Mammary epithelial cell (primary cell): ENCODE measurements at regions of chr5 and their contacts with region 1.

Region 1: DNA sequence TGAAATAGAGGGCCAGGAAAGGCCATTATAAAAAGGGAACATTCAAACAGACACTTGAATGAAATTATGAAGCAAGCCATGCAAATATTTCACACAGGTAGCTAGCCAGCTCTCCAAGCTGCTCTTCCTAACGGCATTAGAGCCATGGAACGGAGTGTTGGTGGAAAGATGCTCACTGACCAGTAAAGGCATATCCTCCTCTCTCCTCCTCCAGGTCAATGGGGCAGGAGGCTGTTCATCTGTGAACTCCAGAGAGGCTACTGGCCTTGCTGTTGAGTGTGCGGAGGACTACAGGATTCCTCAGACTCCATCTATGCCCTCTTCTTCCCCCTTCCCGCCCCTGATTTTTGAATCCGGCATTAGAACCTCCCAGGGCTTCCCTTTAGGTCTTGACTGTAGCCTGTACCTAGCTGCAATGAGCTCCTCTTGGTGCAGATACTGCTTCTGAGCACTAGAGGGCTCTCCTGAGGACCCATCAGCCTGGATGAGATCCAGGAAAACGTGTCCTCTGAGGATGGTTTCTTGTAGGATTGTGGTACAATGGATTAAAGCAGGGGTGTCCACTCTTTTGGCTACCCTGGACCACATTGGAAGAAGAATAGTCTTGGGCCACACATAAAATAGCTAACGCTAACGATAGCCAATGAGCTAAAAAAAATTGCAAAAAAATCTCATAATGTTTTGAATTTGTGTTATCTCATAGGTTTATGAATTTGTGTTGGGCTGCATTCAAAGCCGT is 162.2 kb downstream of the SREK1 start:
- DNase-seq: peak; percentile 58
- H3K4me3 ChIP-seq: no peak overlapping the region
- H3K27ac ChIP-seq: no peak overlapping the region
- H3K4me1 ChIP-seq: no peaks in the 10 kb centered on the region
- H3K27me3 ChIP-seq: no peaks in the 10 kb centered on the region
- CTCF ChIP-seq: peak; percentile 79 to 97

Region 2: DNA sequence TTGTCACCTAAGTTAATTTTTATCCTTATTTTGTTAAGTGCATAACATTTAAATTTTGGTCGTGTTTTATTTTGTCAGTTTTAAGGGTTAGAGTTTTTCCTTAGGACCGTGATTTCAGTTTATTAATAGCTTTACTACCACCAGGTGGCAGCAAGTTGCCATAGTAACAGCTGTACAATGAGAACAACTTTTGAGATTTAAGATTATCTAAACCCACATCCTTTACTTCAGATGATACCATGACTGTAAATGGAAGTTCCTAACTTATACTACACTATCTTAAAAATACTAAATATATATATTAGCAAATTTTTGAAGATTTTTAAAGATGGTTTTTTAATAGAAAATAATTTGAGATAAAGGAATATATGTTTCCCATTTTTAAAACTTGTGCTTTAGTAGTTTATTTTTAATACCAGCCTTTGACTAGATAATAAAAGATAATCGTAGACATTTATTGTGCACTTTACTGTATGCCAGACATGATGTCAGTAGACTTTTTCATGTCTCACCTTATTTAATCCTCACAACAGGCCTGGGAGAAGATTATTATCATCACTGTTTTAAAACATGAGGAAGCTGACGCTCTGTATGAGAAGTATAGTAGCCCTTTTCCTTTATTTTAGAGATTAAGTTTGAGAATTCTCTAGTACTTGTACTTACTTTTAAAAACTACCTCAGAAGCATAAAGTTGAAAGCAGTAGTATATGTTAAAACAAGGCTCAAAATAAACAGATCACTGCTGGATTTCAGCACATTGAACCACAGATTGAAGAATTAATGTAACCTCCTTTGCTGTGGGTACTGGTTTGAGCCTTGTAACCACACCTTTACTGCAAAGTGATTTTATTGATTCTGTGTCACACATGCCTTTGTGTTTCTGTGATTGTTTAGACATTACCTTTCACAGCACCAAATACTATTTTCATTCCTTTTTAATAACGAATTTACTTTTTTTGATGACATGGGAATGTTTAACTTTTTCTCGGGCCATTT is 134.6 kb before region 1 on chr5:
- CTCF ChIA-PET with region 1: no interaction called
- dilution Hi-C with region 1: no loop called
- in situ Hi-C with region 1: no loop called
- intact Hi-C with region 1: loop called (anchors 1 kb)
- DNase-seq: peak; percentile 43
- H3K4me3 ChIP-seq: no peak overlapping the region
- H3K27ac ChIP-seq: peak overlapping the region; percentile 55
- H3K4me1 ChIP-seq: no peaks in the 10 kb centered on the region
- H3K27me3 ChIP-seq: no peaks in the 10 kb centered on the region
- CTCF ChIP-seq: peak; percentile 43 to 60

Region 3: GRCh38 chr5:66285343-66285922 is 20.8 kb before region 1 on chr5:
- CTCF ChIA-PET with region 1: interaction called, 18 read pairs
- dilution Hi-C with region 1: no loop called
- in situ Hi-C with region 1: no loop called
- intact Hi-C with region 1: no loop called
- DNase-seq: no peak
- H3K4me3 ChIP-seq: no peak overlapping the region
- H3K27ac ChIP-seq: no peak overlapping the region
- H3K4me1 ChIP-seq: no peaks in the 10 kb centered on the region
- H3K27me3 ChIP-seq: peaks cover 3% of the 10 kb centered on the region
- CTCF ChIP-seq: no peak

Region 4: GRCh38 chr5:66498791-66499207 is 192.5 kb after region 1 on chr5:
- CTCF ChIA-PET with region 1: interaction called, 3 read pairs
- dilution Hi-C with region 1: no loop called
- in situ Hi-C with region 1: no loop called
- intact Hi-C with region 1: loop called (anchors 2 kb)
- DNase-seq: peak; percentile 42
- H3K4me3 ChIP-seq: no peak overlapping the region
- H3K27ac ChIP-seq: no peak overlapping the region
- H3K4me1 ChIP-seq: no peaks in the 10 kb centered on the region
- H3K27me3 ChIP-seq: peaks cover 2% of the 10 kb centered on the region
- CTCF ChIP-seq: peak; percentile 15 to 28

Region 5: GRCh38 chr5:66757188-66757833 is 451.0 kb after region 1 on chr5:
- CTCF ChIA-PET with region 1: interaction called, 10 read pairs
- dilution Hi-C with region 1: no loop called
- in situ Hi-C with region 1: loop called (anchors 5 kb)
- intact Hi-C with region 1: loop called (anchors 1 kb)
- DNase-seq: peak; percentile 34
- H3K4me3 ChIP-seq: no peak overlapping the region
- H3K27ac ChIP-seq: no peak overlapping the region
- H3K4me1 ChIP-seq: no peaks in the 10 kb centered on the region
- H3K27me3 ChIP-seq: peaks cover 2% of the 10 kb centered on the region
- CTCF ChIP-seq: peak; percentile 32 to 56

Region 6: GRCh38 chr5:66864331-66864840 is 558.1 kb after region 1 on chr5:
- CTCF ChIA-PET with region 1: no interaction called
- dilution Hi-C with region 1: no loop called
- in situ Hi-C with region 1: no loop called
- intact Hi-C with region 1: loop called (anchors 5 kb)
- DNase-seq: peak; percentile 65
- H3K4me3 ChIP-seq: no peak overlapping the region
- H3K27ac ChIP-seq: no peak overlapping the region
- H3K4me1 ChIP-seq: peaks cover 11% of the 10 kb centered on the region
- H3K27me3 ChIP-seq: no peaks in the 10 kb centered on the region
- CTCF ChIP-seq: peak; percentile 60 to 73